CD4-positive, alpha-beta T cell (primary cell): ENCODE measurements at regions of chr13 and their contacts with region 1.

Region 1: GRCh38 chr13:75482070-75482819 is at the start of gene TBC1D4:
- DNase-seq: peak in 13 of 14 experiments; percentile 6 to 73 (median 33)
- ATAC-seq: peak; percentile 54
- H3K4me3 ChIP-seq: peak within 1 kb of the TSS; percentile 76
- H3K4me3 Mint-ChIP-seq: peak within 1 kb of the TSS; percentile 98
- H3K27ac ChIP-seq: no peak within 1 kb of the TSS
- H3K27ac Mint-ChIP-seq: no peak within 1 kb of the TSS
- H3K4me1 ChIP-seq: peaks cover 12% of the 10 kb centered on the region
- H3K4me1 Mint-ChIP-seq: peaks cover 12% of the 10 kb centered on the region
- H3K27me3 ChIP-seq: peaks cover 41 to 73% of the 10 kb centered on the region in 2 experiments
- H3K27me3 Mint-ChIP-seq: peaks cover 90% of the 10 kb centered on the region
- CTCF ChIP-seq: peak; percentile 65
- total RNA-seq, gene TBC1D4: 37.4 to 42.0 TPM

Region 2: DNA sequence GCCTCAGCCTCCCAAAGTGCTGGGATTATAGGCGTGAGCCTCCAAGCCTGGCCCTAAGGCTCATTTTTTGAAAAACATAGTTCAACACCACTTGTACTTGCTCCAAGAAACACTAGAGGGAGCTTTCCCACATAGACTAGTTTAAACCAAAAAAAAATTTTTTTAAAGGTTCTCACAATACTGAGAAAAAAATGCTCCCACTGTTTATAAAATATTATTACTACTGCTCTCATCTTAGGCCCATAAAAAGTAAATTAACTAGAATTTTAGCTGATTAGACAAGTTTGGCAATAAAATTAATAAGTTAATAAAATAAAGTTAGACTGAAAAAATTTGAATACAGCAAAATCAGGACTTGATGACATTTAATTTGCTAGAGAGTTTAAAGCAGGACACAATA is 109.7 kb before region 1 on chr13:
- CTCF ChIA-PET with region 1: no interaction called
- POLR2A ChIA-PET with region 1: no interaction called
- intact Hi-C with region 1: loop called in 1 of 2 experiments (anchors 5 kb)
- DNase-seq: peak in 3 of 14 experiments; percentile 53 to 63 (median 58)
- ATAC-seq: peak; percentile 85
- H3K4me3 ChIP-seq: no peak overlapping the region
- H3K4me3 Mint-ChIP-seq: no peak overlapping the region
- H3K27ac ChIP-seq: no peak overlapping the region
- H3K27ac Mint-ChIP-seq: no peak overlapping the region
- H3K4me1 ChIP-seq: no peaks in the 10 kb centered on the region
- H3K4me1 Mint-ChIP-seq: no peaks in the 10 kb centered on the region
- H3K27me3 ChIP-seq: no peaks in the 10 kb centered on the region
- H3K27me3 Mint-ChIP-seq: no peaks in the 10 kb centered on the region
- CTCF ChIP-seq: peak; percentile 84

Region 3: GRCh38 chr13:75537401-75538365 is 55.4 kb after region 1 on chr13 and contains the start of gene COMMD6:
- CTCF ChIA-PET with region 1: interaction called, 3 read pairs
- POLR2A ChIA-PET with region 1: interaction called, 3 read pairs
- intact Hi-C with region 1: loop called in 1 of 2 experiments (anchors 5 kb)
- DNase-seq: peak; percentile 40 to 84 (median 57)
- ATAC-seq: peak; percentile 92
- H3K4me3 ChIP-seq: peak within 1 kb of the TSS; percentile 67
- H3K4me3 Mint-ChIP-seq: peak within 1 kb of the TSS; percentile 99
- H3K27ac ChIP-seq: peak within 1 kb of the TSS; percentile 4 to 70
- H3K27ac Mint-ChIP-seq: peak within 1 kb of the TSS; percentile 89
- H3K4me1 ChIP-seq: peaks cover 27% of the 10 kb centered on the region
- H3K4me1 Mint-ChIP-seq: peaks cover 55% of the 10 kb centered on the region
- H3K27me3 ChIP-seq: no peaks in the 10 kb centered on the region
- H3K27me3 Mint-ChIP-seq: no peaks in the 10 kb centered on the region
- CTCF ChIP-seq: no peak
- total RNA-seq, gene COMMD6: 211 to 217 TPM

Region 4: GRCh38 chr13:75656425-75656989 is 174.3 kb after region 1 on chr13:
- CTCF ChIA-PET with region 1: no interaction called
- POLR2A ChIA-PET with region 1: no interaction called
- intact Hi-C with region 1: no loop called
- DNase-seq: no peak
- ATAC-seq: no peak
- H3K4me3 ChIP-seq: no peak overlapping the region
- H3K4me3 Mint-ChIP-seq: no peak overlapping the region
- H3K27ac ChIP-seq: no peak overlapping the region
- H3K27ac Mint-ChIP-seq: no peak overlapping the region
- H3K4me1 ChIP-seq: no peaks in the 10 kb centered on the region
- H3K4me1 Mint-ChIP-seq: no peaks in the 10 kb centered on the region
- H3K27me3 ChIP-seq: no peaks in the 10 kb centered on the region
- H3K27me3 Mint-ChIP-seq: no peaks in the 10 kb centered on the region
- CTCF ChIP-seq: no peak

Region 5: GRCh38 chr13:75850916-75851315 is 368.7 kb after region 1 on chr13:
- CTCF ChIA-PET with region 1: no interaction called
- POLR2A ChIA-PET with region 1: no interaction called
- intact Hi-C with region 1: no loop called
- DNase-seq: no peak
- ATAC-seq: no peak
- H3K4me3 ChIP-seq: no peak overlapping the region
- H3K4me3 Mint-ChIP-seq: no peak overlapping the region
- H3K27ac ChIP-seq: no peak overlapping the region
- H3K27ac Mint-ChIP-seq: no peak overlapping the region
- H3K4me1 ChIP-seq: no peaks in the 10 kb centered on the region
- H3K4me1 Mint-ChIP-seq: no peaks in the 10 kb centered on the region
- H3K27me3 ChIP-seq: no peaks in the 10 kb centered on the region
- H3K27me3 Mint-ChIP-seq: no peaks in the 10 kb centered on the region
- CTCF ChIP-seq: no peak